Breast epithelium (tissue), 4 donors: ENCODE measurements at regions of chr16 and their contacts with region 1.

Region 1: DNA sequence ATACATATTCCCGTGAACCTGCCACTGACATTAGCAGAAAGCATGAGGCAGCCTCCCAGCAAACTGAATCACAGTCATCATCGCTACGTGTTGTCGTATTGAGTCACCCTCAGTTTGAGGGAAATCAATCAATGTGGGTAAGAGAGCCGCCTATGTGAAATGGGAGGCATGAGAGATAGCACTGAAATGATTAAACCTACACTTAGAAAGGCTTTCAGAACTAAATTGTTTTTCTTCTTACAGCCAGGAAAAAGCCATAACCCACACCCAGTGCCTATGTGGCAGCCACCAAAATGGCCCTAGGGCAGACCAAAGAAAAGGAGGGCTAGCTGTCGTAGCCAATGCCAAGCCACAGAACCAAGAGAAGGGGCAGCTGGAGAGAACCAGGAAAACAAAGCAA is 90.5 kb downstream of the ADAMTS18 start:
- DNase-seq: no peak
- H3K4me3 ChIP-seq: no peak overlapping the region
- H3K27ac ChIP-seq: no peak overlapping the region
- H3K4me1 ChIP-seq: no peaks in the 10 kb centered on the region
- H3K27me3 ChIP-seq: no peaks in the 10 kb centered on the region
- CTCF ChIP-seq: no peak
- POLR2A ChIP-seq: no peak

Region 2: DNA sequence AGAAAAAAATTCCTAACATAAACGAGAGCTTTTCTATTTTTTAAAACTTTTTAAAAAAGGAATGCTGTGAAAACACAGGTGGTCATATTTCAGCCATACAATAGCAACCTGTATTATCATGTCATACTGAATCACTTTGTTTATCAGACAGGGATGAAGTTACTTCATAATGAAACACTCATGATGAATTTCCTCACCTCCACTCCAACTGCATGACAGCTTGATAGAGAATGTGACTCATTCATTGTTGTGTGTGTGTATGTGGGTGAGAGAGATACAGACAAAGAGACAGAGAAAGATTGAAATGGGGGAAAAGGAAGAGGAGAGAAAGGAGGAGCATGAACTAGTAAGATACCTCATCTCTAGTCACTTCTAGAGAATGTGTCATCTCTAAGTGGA is 36.2 kb before region 1 on chr16:
- intact Hi-C with region 1: no loop called
- DNase-seq: no peak
- H3K4me3 ChIP-seq: no peak overlapping the region
- H3K27ac ChIP-seq: no peak overlapping the region
- H3K4me1 ChIP-seq: no peaks in the 10 kb centered on the region
- H3K27me3 ChIP-seq: no peaks in the 10 kb centered on the region
- CTCF ChIP-seq: no peak
- POLR2A ChIP-seq: no peak

Region 3: DNA sequence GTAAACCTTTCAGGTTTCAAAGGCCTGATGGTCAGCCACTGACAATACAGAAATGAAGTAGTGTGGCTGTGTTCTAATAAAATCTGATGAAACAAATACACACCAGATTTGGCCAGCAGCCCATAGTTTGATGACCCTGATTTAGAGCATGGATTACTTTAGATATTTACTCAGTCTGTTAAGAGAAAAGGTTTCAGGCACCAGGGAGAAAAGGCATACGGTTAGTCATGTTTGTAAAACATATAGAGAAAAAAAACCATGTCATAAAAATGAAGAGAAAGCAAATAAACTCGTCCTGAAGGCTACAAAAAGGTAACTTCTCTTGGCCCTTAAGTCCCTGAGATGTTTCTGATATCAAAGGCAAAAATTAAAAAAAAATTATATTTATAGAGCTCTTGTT is 21.6 kb before region 1 on chr16:
- intact Hi-C with region 1: loop called (anchors 1 kb)
- DNase-seq: no peak
- H3K4me3 ChIP-seq: no peak overlapping the region
- H3K27ac ChIP-seq: no peak overlapping the region
- H3K4me1 ChIP-seq: no peaks in the 10 kb centered on the region
- H3K27me3 ChIP-seq: no peaks in the 10 kb centered on the region
- CTCF ChIP-seq: no peak
- POLR2A ChIP-seq: no peak